Pancreas (tissue), 10 donors: ENCODE measurements at regions of chr16 and their contacts with region 1.

Region 1: DNA sequence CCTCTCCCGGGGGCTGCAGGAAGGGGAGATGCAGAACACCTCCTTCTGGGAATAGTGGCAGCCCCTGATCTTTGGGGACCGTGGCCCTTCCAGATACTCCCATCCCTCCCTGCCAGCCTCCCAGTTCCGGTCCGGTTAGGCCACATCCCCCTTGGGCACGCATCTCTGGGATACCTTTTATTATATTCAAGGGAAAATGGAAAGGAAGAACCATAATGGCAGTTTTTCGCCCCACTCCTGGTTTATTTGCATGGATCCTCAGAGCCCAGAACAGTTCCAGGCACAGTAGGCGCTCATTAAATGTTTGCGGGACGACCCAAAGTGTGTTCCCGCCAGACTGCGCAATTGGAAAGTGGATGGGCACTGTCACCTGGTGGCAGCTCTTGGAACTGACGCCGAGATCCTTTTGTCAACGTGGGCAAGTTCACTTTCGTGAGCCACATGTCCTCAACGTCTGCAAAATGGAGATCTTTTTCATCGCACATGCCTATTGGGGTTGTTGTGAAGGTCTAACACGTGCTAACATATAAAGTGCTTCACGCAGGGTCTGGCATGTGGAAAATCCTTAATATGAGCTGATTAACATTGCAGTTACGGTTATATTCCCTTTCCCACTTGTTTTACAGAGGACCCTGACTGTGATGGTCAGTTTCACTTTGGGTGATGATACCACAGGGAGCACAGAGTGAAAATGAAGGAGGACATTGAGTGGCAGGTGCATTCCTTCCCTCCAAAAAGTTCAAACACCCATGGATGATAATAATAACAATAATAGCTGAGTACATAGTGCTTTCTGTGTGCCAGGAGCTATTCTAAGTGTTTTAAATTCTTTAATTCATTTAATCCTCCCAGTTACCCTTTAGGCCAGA is 1.7 kb upstream of the GPRC5B start:
- DNase-seq: peak; percentile 60 to 89 (median 80)
- ATAC-seq: peak; percentile 65 to 76 (median 73)
- H3K4me3 ChIP-seq: peak overlapping the region in 2 of 4 donors; percentile 74 to 82
- H3K27ac ChIP-seq: no peak overlapping the region
- H3K4me1 ChIP-seq: peaks cover 0 to 10% (median 6%) of the 10 kb centered on the region in 3 donors
- H3K27me3 ChIP-seq: no peaks in the 10 kb centered on the region
- CTCF ChIP-seq: peak; percentile 95 to 99 (median 99)

Region 2: DNA sequence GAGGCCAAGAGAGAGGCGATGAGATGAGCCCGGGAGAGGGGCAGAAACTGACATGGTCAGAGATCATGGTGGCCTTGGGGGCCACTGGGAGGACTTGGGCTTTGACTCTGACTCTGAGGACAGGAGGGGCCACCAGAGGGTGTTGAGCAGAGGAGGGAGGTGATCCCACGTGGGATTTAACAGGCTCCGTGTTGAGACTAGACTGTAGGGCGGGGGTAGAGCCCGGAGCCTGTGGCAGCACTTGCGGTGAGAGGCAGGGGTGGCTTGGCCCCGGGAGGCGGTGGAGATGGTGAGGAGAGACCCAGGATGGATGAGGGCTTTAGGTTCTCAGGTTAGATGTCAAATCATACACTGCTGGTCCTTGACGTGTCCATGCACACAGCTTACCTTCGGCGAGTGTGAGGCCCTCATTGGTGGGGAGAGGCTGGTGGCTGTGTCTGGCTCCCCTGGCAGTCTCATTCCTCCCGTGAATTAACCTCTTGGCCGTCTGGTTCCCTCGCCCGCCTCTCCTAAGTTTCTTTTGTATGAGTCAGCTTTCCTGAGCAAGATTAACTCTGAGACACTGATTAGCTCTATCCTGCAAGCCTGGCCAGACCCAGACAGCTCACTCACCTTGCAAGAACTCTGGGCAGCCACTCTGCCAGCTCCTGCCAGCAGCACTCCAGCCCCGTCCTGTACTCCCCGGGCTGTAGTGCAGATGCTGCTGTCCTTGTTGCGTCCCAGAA is 291.1 kb before region 1 on chr16:
- intact Hi-C with region 1: loop called (anchors 5 to 10 kb)
- DNase-seq: peak in 3 of 6 donors; percentile 31 to 69 (median 69)
- ATAC-seq: peak in 2 of 4 donors; percentile 93
- H3K4me3 ChIP-seq: no peak overlapping the region
- H3K27ac ChIP-seq: no peak overlapping the region
- H3K4me1 ChIP-seq: no peaks in the 10 kb centered on the region
- H3K27me3 ChIP-seq: no peaks in the 10 kb centered on the region
- CTCF ChIP-seq: no peak

Region 3: GRCh38 chr16:19601083-19601976 is 285.0 kb before region 1 on chr16:
- intact Hi-C with region 1: loop called (anchors 5 to 10 kb)
- DNase-seq: peak in 1 of 6 donors; percentile 35
- ATAC-seq: peak; percentile 35 to 70 (median 61)
- H3K4me3 ChIP-seq: no peak overlapping the region
- H3K27ac ChIP-seq: no peak overlapping the region
- H3K4me1 ChIP-seq: no peaks in the 10 kb centered on the region
- H3K27me3 ChIP-seq: no peaks in the 10 kb centered on the region
- CTCF ChIP-seq: peak; percentile 29 to 49 (median 32)

Region 4: GRCh38 chr16:19717771-19718602 is 168.3 kb before region 1 on chr16 and contains the starts of genes IQCK and KNOP1:
- intact Hi-C with region 1: loop called in 2 of 3 experiments (anchors 10 kb)
- DNase-seq: peak; percentile 86 to 95 (median 88)
- ATAC-seq: peak; percentile 96 to 99 (median 98)
- H3K4me3 ChIP-seq: peak within 1 kb of the TSS; percentile 97 to 100 (median 100)
- H3K27ac ChIP-seq: peak within 1 kb of the TSS; percentile 46 to 76 (median 61)
- H3K4me1 ChIP-seq: peaks cover 6 to 23% (median 12%) of the 10 kb centered on the region in 3 donors
- H3K27me3 ChIP-seq: no peaks in the 10 kb centered on the region
- CTCF ChIP-seq: no peak
- total RNA-seq, gene IQCK: 6.7 to 15.5 (median 10.4) TPM
- total RNA-seq, gene KNOP1: 4.4 to 13.9 (median 7.4) TPM

Region 5: GRCh38 chr16:19753815-19754643 is 132.3 kb before region 1 on chr16:
- intact Hi-C with region 1: no loop called
- DNase-seq: peak in 1 of 6 donors; percentile 21
- ATAC-seq: peak; percentile 81 to 88 (median 84)
- H3K4me3 ChIP-seq: no peak overlapping the region
- H3K27ac ChIP-seq: peak overlapping the region; percentile 19 to 82 (median 54)
- H3K4me1 ChIP-seq: peaks cover 17 to 29% (median 27%) of the 10 kb centered on the region in 3 donors
- H3K27me3 ChIP-seq: no peaks in the 10 kb centered on the region
- CTCF ChIP-seq: no peak

Region 6: DNA sequence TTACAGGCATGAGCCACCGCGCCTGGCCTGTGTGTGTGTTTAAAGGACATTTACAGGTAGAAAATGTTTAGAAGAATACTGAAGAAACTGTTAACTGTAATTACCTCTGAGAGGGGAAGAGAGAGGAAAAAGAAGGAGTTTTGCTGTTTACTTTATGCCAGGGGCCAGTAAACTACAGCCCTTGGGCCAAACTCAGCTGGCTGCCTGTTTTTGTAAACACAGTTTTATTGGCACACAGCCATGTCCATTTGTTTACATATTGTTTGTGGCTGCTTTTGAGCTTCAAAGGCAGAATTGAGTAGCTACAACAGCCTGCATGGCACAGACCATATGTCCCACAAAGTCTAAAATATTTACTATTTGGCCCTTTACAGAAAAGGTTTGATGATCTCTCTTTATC is 111.0 kb after region 1 on chr16:
- intact Hi-C with region 1: no loop called
- DNase-seq: no peak
- ATAC-seq: no peak
- H3K4me3 ChIP-seq: no peak overlapping the region
- H3K27ac ChIP-seq: no peak overlapping the region
- H3K4me1 ChIP-seq: peaks cover 0 to 3% (median 0%) of the 10 kb centered on the region in 3 donors
- H3K27me3 ChIP-seq: no peaks in the 10 kb centered on the region
- CTCF ChIP-seq: no peak

Region 7: GRCh38 chr16:20042848-20043247 is 156.5 kb after region 1 on chr16:
- intact Hi-C with region 1: no loop called
- DNase-seq: no peak
- ATAC-seq: no peak
- H3K4me3 ChIP-seq: no peak overlapping the region
- H3K27ac ChIP-seq: no peak overlapping the region
- H3K4me1 ChIP-seq: no peaks in the 10 kb centered on the region
- H3K27me3 ChIP-seq: peaks cover 0 to 3% (median 0%) of the 10 kb centered on the region in 4 donors
- CTCF ChIP-seq: no peak